Naive thymus-derived CD4-positive, alpha-beta T cell (primary cell): ENCODE measurements at regions of chr7 and their contacts with region 1.

Region 1: DNA sequence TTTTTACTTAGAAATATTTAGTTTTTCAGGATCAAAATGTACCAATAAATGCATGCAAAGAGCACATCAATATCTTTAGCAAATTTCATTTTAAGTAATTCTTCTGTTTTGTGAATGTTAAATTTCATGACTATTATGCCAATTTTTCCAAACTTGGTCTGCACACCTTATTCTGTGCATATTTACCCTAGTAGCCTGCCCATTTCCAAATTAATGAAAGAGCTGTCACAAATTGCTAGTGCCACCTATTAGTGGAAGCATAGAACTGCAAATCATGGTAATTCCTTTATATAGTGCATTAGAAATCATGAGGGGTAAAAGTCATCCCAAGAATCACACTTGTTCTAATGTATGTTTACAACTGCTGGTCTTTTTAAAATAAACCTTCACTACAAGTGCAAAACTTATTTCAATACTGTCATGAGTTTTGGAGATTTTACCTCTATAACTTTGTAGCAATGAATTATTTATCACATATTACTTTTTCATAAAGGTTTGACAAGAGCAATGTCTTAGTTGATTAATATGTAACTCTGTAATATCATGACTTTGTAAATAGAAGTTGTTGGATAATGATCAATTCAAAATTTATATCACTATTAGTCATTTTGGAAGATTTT is 5.7 kb downstream of the SEMA3A start:
- DNase-seq: peak in 1 of 9 donors; percentile 6
- ATAC-seq: no peak
- H3K4me3 ChIP-seq: no peak overlapping the region
- H3K4me3 Mint-ChIP-seq: no peak overlapping the region
- H3K27ac ChIP-seq: no peak overlapping the region
- H3K27ac Mint-ChIP-seq: peak overlapping the region in 1 of 9 donors; percentile 52
- H3K4me1 ChIP-seq: no peaks in the 10 kb centered on the region
- H3K4me1 Mint-ChIP-seq: peaks cover 0 to 48% (median 26%) of the 10 kb centered on the region in 7 donors
- H3K27me3 ChIP-seq: no peaks in the 10 kb centered on the region
- H3K27me3 Mint-ChIP-seq: peaks cover 0 to 8% (median 0%) of the 10 kb centered on the region in 5 donors

Region 2: GRCh38 chr7:83936056-83936708 is 252.7 kb before region 1 on chr7:
- CTCF ChIA-PET with region 1: interaction called, 4 read pairs
- POLR2A ChIA-PET with region 1: no interaction called
- intact Hi-C with region 1: loop called in 1 of 2 experiments (anchors 2 kb)
- DNase-seq: peak in 8 of 9 donors; percentile 13 to 68 (median 58)
- ATAC-seq: peak; percentile 63
- H3K4me3 ChIP-seq: no peak overlapping the region
- H3K4me3 Mint-ChIP-seq: no peak overlapping the region
- H3K27ac ChIP-seq: no peak overlapping the region
- H3K27ac Mint-ChIP-seq: no peak overlapping the region
- H3K4me1 ChIP-seq: no peaks in the 10 kb centered on the region
- H3K4me1 Mint-ChIP-seq: peaks cover 0 to 5% (median 3%) of the 10 kb centered on the region in 7 donors
- H3K27me3 ChIP-seq: no peaks in the 10 kb centered on the region
- H3K27me3 Mint-ChIP-seq: peaks cover 0 to 4% (median 0%) of the 10 kb centered on the region in 5 donors

Region 3: GRCh38 chr7:83976295-83976694 is 212.6 kb before region 1 on chr7:
- CTCF ChIA-PET with region 1: interaction called, 6 read pairs
- POLR2A ChIA-PET with region 1: no interaction called
- intact Hi-C with region 1: loop called (anchors 1 kb)
- DNase-seq: peak in 7 of 9 donors; percentile 10 to 67 (median 56)
- ATAC-seq: peak; percentile 69
- H3K4me3 ChIP-seq: no peak overlapping the region
- H3K4me3 Mint-ChIP-seq: no peak overlapping the region
- H3K27ac ChIP-seq: no peak overlapping the region
- H3K27ac Mint-ChIP-seq: no peak overlapping the region
- H3K4me1 ChIP-seq: no peaks in the 10 kb centered on the region
- H3K4me1 Mint-ChIP-seq: peaks cover 0 to 1% (median 0%) of the 10 kb centered on the region in 7 donors
- H3K27me3 ChIP-seq: no peaks in the 10 kb centered on the region
- H3K27me3 Mint-ChIP-seq: no peaks in the 10 kb centered on the region

Region 4: DNA sequence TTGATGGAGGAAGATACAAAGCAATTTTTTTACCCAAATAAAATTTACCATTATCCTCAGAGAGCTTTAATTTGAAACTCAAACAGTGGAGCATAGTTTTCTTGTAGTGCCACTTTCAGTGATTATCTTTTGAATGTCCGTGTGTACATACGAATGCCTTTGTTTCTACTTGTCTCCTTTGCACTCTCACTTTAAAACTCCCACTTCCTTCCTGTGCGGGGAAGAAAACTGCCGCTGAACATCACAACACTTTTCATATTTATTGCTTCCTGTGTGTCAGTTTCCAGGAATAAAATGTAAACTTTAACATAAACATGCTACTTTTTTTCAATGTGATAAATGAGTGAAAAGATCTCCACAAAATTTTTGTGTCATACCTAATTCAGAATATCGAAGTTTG is 96.7 kb before region 1 on chr7:
- CTCF ChIA-PET with region 1: no interaction called
- POLR2A ChIA-PET with region 1: no interaction called
- intact Hi-C with region 1: loop called (anchors 2 to 10 kb)
- DNase-seq: peak in 8 of 9 donors; percentile 10 to 72 (median 53)
- ATAC-seq: peak; percentile 64
- H3K4me3 ChIP-seq: no peak overlapping the region
- H3K4me3 Mint-ChIP-seq: peak overlapping the region; percentile 51 to 81 (median 74)
- H3K27ac ChIP-seq: peak overlapping the region; percentile 55
- H3K27ac Mint-ChIP-seq: peak overlapping the region; percentile 52 to 94 (median 87)
- H3K4me1 ChIP-seq: peaks cover 0 to 27% of the 10 kb centered on the region in 2 donors
- H3K4me1 Mint-ChIP-seq: peaks cover 15 to 83% (median 69%) of the 10 kb centered on the region in 7 donors
- H3K27me3 ChIP-seq: no peaks in the 10 kb centered on the region
- H3K27me3 Mint-ChIP-seq: no peaks in the 10 kb centered on the region

Region 5: GRCh38 chr7:84154991-84155781 is 33.7 kb before region 1 on chr7:
- CTCF ChIA-PET with region 1: no interaction called
- POLR2A ChIA-PET with region 1: no interaction called
- intact Hi-C with region 1: loop called in 1 of 2 experiments (anchors 2 kb)
- DNase-seq: no peak
- ATAC-seq: no peak
- H3K4me3 ChIP-seq: no peak overlapping the region
- H3K4me3 Mint-ChIP-seq: no peak overlapping the region
- H3K27ac ChIP-seq: no peak overlapping the region
- H3K27ac Mint-ChIP-seq: no peak overlapping the region
- H3K4me1 ChIP-seq: no peaks in the 10 kb centered on the region
- H3K4me1 Mint-ChIP-seq: peaks cover 0 to 4% (median 0%) of the 10 kb centered on the region in 7 donors
- H3K27me3 ChIP-seq: no peaks in the 10 kb centered on the region
- H3K27me3 Mint-ChIP-seq: no peaks in the 10 kb centered on the region

Region 6: GRCh38 chr7:84455788-84456187 is 266.9 kb after region 1 on chr7:
- CTCF ChIA-PET with region 1: no interaction called
- POLR2A ChIA-PET with region 1: no interaction called
- intact Hi-C with region 1: loop called in 1 of 2 experiments (anchors 2 kb)
- DNase-seq: no peak
- ATAC-seq: no peak
- H3K4me3 ChIP-seq: no peak overlapping the region
- H3K4me3 Mint-ChIP-seq: no peak overlapping the region
- H3K27ac ChIP-seq: no peak overlapping the region
- H3K27ac Mint-ChIP-seq: no peak overlapping the region
- H3K4me1 ChIP-seq: no peaks in the 10 kb centered on the region
- H3K4me1 Mint-ChIP-seq: no peaks in the 10 kb centered on the region
- H3K27me3 ChIP-seq: no peaks in the 10 kb centered on the region
- H3K27me3 Mint-ChIP-seq: no peaks in the 10 kb centered on the region

Region 7: DNA sequence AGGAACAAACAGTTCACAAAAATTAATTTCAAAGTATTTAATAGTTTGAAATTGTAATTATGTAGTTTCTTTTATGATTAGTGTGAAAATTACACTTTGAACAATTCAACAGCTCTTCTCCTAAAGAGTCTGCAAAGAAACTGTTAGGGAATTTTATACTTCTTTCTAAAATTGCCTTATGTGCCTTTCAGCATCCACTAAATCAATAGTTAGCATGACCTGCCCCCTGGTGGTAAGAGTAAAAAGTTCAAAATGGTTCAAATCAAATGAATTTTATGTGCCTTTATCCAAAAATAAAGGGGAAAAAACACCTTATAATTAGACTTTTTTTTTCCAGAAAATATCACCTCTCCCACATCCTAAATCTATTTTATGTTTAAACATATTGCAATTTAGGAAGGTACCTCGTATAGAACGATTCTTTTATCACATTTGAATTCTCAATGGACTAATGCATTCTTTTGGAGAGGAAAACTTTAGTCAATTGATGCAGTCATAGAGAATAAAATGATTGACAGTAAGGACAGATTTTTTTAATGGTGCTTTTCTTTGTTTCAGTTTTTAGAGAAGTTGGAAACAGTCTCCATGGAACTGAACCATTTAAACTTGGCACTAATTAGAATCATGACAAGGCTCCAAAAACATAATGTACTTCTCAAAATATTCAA is 834.3 kb after region 1 on chr7:
- CTCF ChIA-PET with region 1: interaction called, 3 read pairs
- POLR2A ChIA-PET with region 1: no interaction called
- intact Hi-C with region 1: loop called (anchors 1 to 2 kb)
- DNase-seq: peak in 7 of 9 donors; percentile 12 to 60 (median 45)
- ATAC-seq: no peak
- H3K4me3 ChIP-seq: no peak overlapping the region
- H3K4me3 Mint-ChIP-seq: no peak overlapping the region
- H3K27ac ChIP-seq: no peak overlapping the region
- H3K27ac Mint-ChIP-seq: no peak overlapping the region
- H3K4me1 ChIP-seq: no peaks in the 10 kb centered on the region
- H3K4me1 Mint-ChIP-seq: no peaks in the 10 kb centered on the region
- H3K27me3 ChIP-seq: no peaks in the 10 kb centered on the region
- H3K27me3 Mint-ChIP-seq: peaks cover 0 to 8% (median 4%) of the 10 kb centered on the region in 5 donors